Natural killer cell (primary cell): ENCODE measurements at regions of chr17 and their contacts with region 1.

Region 1: DNA sequence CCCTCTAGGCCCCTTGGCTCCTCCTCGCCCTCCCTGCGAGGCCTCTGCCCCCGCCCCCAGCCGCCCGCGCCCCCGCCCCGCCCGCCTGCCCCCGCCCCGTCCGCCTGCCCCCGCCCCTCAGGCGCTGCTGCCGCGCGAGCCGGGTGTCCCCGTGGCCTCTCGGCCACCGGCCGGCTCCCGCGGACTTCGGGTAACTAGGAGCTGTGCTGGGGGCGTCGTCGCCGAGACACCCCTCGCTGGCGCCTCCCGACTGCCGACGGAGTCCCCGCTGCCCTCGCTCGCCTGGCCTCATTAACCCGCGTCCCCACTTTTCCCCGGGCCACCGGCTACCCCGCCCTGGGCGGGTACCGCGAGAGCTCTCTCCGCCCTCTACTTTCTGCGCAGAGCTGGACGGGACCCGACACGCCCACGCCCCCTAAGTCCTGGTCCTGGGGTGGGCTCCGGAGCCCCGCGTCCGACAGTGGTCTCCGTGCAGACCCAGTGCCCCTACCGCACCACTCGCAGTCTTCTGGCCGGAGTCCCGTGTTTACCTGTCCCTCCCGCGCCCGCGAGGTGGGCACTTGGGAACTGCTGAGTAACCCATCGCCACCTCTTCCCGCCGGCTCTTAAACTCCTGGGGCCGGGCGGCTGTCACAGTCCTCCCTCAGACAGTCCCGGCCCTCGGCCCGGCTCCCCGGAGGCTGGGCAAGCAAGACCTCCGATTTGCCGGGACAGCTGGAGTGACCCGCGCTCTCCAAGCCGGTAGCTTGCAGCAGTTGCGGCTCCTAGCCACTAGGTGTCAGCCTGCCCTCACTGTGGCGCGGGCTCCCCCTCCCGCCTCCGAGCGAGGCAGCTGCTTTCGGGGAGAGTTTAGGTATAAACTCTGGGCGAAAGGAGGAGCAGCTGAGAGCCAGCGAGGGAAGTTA is at the start of gene TLCD1:
- DNase-seq: peak; percentile 88 to 94
- ATAC-seq: peak; percentile 58 to 79 (median 59)
- H3K4me3 ChIP-seq: peak within 1 kb of the TSS; percentile 71
- H3K4me3 Mint-ChIP-seq: peak within 1 kb of the TSS; percentile 96
- H3K27ac ChIP-seq: peak within 1 kb of the TSS; percentile 99
- H3K27ac Mint-ChIP-seq: peak within 1 kb of the TSS; percentile 96
- H3K4me1 ChIP-seq: peaks cover 54% of the 10 kb centered on the region
- H3K4me1 Mint-ChIP-seq: peaks cover 38 to 41% of the 10 kb centered on the region in 2 donors
- H3K27me3 ChIP-seq: no peaks in the 10 kb centered on the region
- H3K27me3 Mint-ChIP-seq: no peaks in the 10 kb centered on the region
- CTCF ChIP-seq: peak; percentile 99
- total RNA-seq, gene TLCD1: 1.0 TPM in 1 of 3 donors, not detected in the others

Region 2: GRCh38 chr17:28750178-28751047 is 23.9 kb after region 1 on chr17:
- intact Hi-C with region 1: loop called (anchors 1 kb)
- DNase-seq: peak; percentile 85 to 95
- ATAC-seq: peak; percentile 95 to 97 (median 96)
- H3K4me3 ChIP-seq: no peak overlapping the region
- H3K4me3 Mint-ChIP-seq: no peak overlapping the region
- H3K27ac ChIP-seq: no peak overlapping the region
- H3K27ac Mint-ChIP-seq: no peak overlapping the region
- H3K4me1 ChIP-seq: peaks cover 24% of the 10 kb centered on the region
- H3K4me1 Mint-ChIP-seq: peaks cover 5 to 9% of the 10 kb centered on the region in 2 donors
- H3K27me3 ChIP-seq: no peaks in the 10 kb centered on the region
- H3K27me3 Mint-ChIP-seq: no peaks in the 10 kb centered on the region
- CTCF ChIP-seq: peak; percentile 100

Region 3: DNA sequence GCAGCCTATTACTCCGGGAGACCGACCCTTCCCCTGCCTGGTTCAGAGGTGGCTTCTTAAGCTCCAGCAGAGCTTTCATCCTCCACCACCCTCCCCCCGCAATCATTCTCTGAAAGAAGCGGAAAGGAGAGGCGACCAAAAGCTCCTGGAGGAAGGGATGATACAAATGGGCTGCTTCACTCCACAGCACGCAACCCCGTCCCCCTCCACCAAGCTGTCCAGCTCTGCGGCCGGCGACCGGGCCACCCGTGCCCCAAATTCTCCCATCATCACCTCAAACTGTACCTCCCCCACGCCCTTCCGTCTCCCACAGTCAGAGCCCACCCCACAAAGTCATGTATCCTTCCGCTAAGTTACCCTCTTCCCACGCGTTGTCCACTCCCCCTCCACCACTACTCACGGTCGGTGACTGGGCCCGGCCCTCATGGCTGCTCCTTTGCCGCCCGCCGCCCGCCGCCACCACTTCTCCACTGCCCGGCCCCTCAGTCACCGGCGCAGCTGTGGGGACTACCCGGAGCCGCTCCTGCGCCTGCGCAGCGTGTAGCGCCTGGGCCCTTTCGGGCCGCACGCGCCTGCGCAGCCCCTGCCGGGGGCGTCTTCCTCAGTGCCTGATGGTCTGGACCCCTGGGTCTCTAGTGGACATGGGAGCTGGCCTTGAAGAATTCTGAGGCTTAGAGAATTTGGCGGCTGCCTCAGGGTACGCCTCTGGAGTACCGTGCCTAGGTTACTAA is 116.0 kb after region 1 on chr17 and contains the start of gene FAM222B:
- intact Hi-C with region 1: no loop called
- DNase-seq: peak; percentile 82 to 95
- ATAC-seq: peak; percentile 96 to 98 (median 97)
- H3K4me3 ChIP-seq: peak within 1 kb of the TSS; percentile 86
- H3K4me3 Mint-ChIP-seq: peak within 1 kb of the TSS; percentile 94
- H3K27ac ChIP-seq: peak within 1 kb of the TSS; percentile 64
- H3K27ac Mint-ChIP-seq: peak within 1 kb of the TSS; percentile 92 to 99
- H3K4me1 ChIP-seq: peaks cover 17% of the 10 kb centered on the region
- H3K4me1 Mint-ChIP-seq: peaks cover 13 to 21% of the 10 kb centered on the region in 2 donors
- H3K27me3 ChIP-seq: no peaks in the 10 kb centered on the region
- H3K27me3 Mint-ChIP-seq: no peaks in the 10 kb centered on the region
- CTCF ChIP-seq: no peak
- total RNA-seq, gene FAM222B: 16.9 to 26.0 (median 20.0) TPM

Region 4: DNA sequence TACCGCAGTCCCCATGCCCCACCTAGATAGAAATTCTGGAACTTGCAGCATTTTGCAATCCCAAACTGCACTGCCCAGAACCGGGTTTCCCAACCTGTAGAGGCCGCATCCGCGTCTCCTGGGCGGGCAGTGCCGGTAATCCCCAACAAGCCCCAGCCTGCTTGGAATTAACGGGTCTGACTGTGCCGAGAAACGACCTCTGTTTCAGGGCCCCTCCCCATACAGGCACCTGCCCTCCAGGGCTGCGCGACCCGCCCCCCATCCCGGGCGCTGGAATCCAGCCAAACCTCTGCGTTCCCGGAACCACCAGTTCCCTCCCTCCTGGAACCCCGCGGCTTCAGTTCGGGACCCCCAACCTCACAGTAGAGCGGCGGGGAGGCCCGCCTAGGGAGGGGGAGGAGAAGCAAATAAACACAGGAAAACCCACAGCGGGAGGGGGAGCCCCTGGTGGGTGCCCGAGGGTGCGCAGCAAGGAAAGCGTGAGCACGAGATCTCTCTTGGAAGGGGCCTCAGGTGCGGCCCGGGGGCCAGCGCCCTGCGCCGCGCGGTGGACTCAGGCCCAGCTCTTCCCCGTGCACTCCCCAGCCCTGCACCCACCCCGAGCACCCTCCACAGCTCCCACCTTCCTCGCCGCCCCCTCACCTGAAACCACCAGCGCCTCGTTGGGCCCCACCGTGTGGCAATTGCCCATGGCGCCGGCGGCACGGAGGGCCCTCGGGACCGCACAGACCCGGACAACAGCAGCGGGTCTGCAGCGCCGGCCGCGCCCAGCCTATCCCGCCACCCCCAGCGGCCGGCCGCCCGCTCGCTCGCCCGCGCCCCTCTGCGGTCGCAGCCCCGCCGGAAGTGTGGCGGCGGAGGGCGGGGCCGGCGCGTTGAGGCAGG is 170.6 kb after region 1 on chr17 and contains the start of gene FLOT2:
- intact Hi-C with region 1: loop called (anchors 5 kb)
- DNase-seq: peak; percentile 61 to 82
- ATAC-seq: peak; percentile 74 to 80 (median 76)
- H3K4me3 ChIP-seq: peak within 1 kb of the TSS; percentile 94
- H3K4me3 Mint-ChIP-seq: peak within 1 kb of the TSS; percentile 90
- H3K27ac ChIP-seq: peak within 1 kb of the TSS; percentile 89
- H3K27ac Mint-ChIP-seq: peak within 1 kb of the TSS; percentile 93 to 97
- H3K4me1 ChIP-seq: peaks cover 71% of the 10 kb centered on the region
- H3K4me1 Mint-ChIP-seq: peaks cover 53 to 65% of the 10 kb centered on the region in 2 donors
- H3K27me3 ChIP-seq: no peaks in the 10 kb centered on the region
- H3K27me3 Mint-ChIP-seq: no peaks in the 10 kb centered on the region
- CTCF ChIP-seq: peak; percentile 50
- total RNA-seq, gene FLOT2: 132 to 152 (median 152) TPM

Region 5: GRCh38 chr17:28916302-28916934 is 189.9 kb after region 1 on chr17:
- intact Hi-C with region 1: loop called (anchors 2 kb)
- DNase-seq: peak in 1 of 2 donors; percentile 69
- ATAC-seq: peak; percentile 75 to 82 (median 81)
- H3K4me3 ChIP-seq: no peak overlapping the region
- H3K4me3 Mint-ChIP-seq: no peak overlapping the region
- H3K27ac ChIP-seq: no peak overlapping the region
- H3K27ac Mint-ChIP-seq: peak overlapping the region; percentile 59 to 78
- H3K4me1 ChIP-seq: no peaks in the 10 kb centered on the region
- H3K4me1 Mint-ChIP-seq: peaks cover 3 to 6% of the 10 kb centered on the region in 2 donors
- H3K27me3 ChIP-seq: no peaks in the 10 kb centered on the region
- H3K27me3 Mint-ChIP-seq: no peaks in the 10 kb centered on the region
- CTCF ChIP-seq: peak; percentile 76